ENCODE measurements at regions of chr4 and their contacts with region 1.

Region 1: GRCh38 chr4:53377319-53378170 is at the start of gene FIP1L1:
- DNase-seq: peak; percentile 85 to 93 (median 89)
- H3K4me3 ChIP-seq: peak within 1 kb of the TSS; percentile 60 to 99 (median 90)
- H3K27ac ChIP-seq: peak within 1 kb of the TSS in 57 of 59 donors; percentile 30 to 93 (median 80)
- H3K27me3 ChIP-seq: peaks cover 0 to 2% (median 0%) of the 10 kb centered on the region in 45 donors
- CTCF ChIP-seq: peak in 35 of 56 donors; percentile 9 to 50 (median 32)
- total RNA-seq, gene FIP1L1: 48.3 to 86.9 (median 66.4) TPM

Region 2: GRCh38 chr4:53313510-53313909 is 64.0 kb before region 1 on chr4:
- intact Hi-C with region 1: no loop called
- DNase-seq: peak in 3 of 10 donors; percentile 7 to 44 (median 43)
- H3K4me3 ChIP-seq: no peak overlapping the region
- H3K27ac ChIP-seq: no peak overlapping the region
- H3K27me3 ChIP-seq: no peaks in the 10 kb centered on the region
- CTCF ChIP-seq: peak in 47 of 56 donors; percentile 9 to 71 (median 38)

Region 3: GRCh38 chr4:53365486-53366300 is 11.9 kb before region 1 on chr4 and contains the start of gene SCFD2:
- intact Hi-C with region 1: loop called in 1 of 2 experiments (anchors 1 kb)
- DNase-seq: peak; percentile 96 to 99 (median 99)
- H3K4me3 ChIP-seq: peak within 1 kb of the TSS; percentile 70 to 99 (median 94)
- H3K27ac ChIP-seq: peak within 1 kb of the TSS in 52 of 59 donors; percentile 14 to 83 (median 68)
- H3K27me3 ChIP-seq: peaks cover 0 to 22% (median 0%) of the 10 kb centered on the region in 45 donors
- CTCF ChIP-seq: peak in 10 of 56 donors; percentile 6 to 33 (median 20)
- total RNA-seq, gene SCFD2: 13.8 to 29.8 (median 23.4) TPM

Region 4: DNA sequence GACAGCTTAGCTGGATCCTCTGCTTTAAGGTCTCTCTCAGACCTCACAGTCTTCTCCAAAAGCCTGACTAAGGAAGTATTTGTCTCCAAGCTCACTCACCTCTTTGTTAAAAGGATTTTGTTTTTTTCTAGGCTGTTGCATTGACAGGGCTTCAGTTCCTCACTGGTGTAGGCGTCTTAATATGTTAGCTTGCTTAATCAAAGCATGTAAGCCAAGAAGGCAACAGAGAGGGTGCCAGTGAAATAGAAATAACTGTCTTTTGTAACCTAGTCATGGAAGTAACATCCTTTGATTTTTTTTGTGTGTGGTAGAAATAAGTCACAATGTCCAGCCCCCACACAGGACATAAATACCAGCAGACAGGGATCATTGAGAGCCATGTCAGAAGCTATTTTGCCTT is 58.7 kb after region 1 on chr4:
- intact Hi-C with region 1: no loop called
- DNase-seq: no peak
- H3K4me3 ChIP-seq: no peak overlapping the region
- H3K27ac ChIP-seq: peak overlapping the region in 1 of 59 donors; percentile 6
- H3K27me3 ChIP-seq: no peaks in the 10 kb centered on the region
- CTCF ChIP-seq: no peak

Region 5: GRCh38 chr4:53614591-53614990 is 237.0 kb after region 1 on chr4:
- intact Hi-C with region 1: no loop called
- DNase-seq: no peak
- H3K4me3 ChIP-seq: no peak overlapping the region
- H3K27ac ChIP-seq: no peak overlapping the region
- H3K27me3 ChIP-seq: peaks cover 0 to 4% (median 0%) of the 10 kb centered on the region in 45 donors
- CTCF ChIP-seq: no peak

Region 6: GRCh38 chr4:54064295-54065111 is 687.0 kb after region 1 on chr4 and contains the start of gene CHIC2:
- intact Hi-C with region 1: loop called in 1 of 2 experiments (anchors 10 kb)
- DNase-seq: peak; percentile 79 to 95 (median 92)
- H3K4me3 ChIP-seq: peak within 1 kb of the TSS; percentile 56 to 99 (median 94)
- H3K27ac ChIP-seq: peak within 1 kb of the TSS in 58 of 59 donors; percentile 56 to 94 (median 85)
- H3K27me3 ChIP-seq: no peaks in the 10 kb centered on the region
- CTCF ChIP-seq: peak in 7 of 56 donors; percentile 8 to 31 (median 20)
- total RNA-seq, gene CHIC2: 10.0 to 28.8 (median 19.4) TPM